ENCODE measurements at regions of chr6 and their contacts with region 1.

Region 1: DNA sequence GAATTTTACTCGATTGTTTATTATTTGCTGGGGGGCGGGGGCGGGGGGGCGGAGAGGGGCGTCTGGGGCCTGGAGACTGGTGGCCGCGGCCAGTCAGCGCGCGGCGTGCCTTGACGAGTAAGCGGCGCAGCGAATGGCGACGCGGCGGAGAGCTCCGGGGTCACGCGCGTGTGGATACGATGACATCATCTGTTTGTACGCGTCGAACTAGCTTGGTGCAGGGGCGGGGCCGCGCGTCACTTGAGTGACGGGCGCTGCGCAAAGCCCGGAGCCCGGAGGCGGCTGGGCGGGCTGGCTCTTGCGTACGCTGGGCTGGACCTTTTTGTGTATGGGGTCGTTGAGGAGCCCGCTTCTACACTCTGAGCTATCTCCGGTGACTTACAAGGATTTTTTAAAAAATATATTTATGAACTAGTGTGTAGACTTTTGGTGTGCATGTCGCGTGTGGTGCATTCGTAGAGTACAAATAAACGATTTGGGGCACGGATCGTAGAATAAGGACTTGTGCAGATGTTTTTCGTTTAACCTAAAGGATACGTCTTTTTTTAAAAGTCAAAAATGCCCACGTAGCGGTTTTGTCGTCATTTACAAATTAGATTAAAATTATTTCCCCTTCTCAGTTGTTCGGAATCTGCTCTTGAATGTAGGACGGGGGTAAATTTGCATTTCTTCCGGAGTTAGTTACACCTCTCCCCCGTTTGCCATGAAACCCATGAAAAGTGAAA is 2.2 kb upstream of the FOXO3 start:
- DNase-seq: peak; percentile 65 to 99
- ATAC-seq: peak; percentile 62 to 78
- H3K4me3 ChIP-seq: peak overlapping the region; percentile 95
- H3K27ac ChIP-seq: peak overlapping the region; percentile 95 to 98
- H3K4me1 ChIP-seq: peaks cover 15% of the 10 kb centered on the region; the same call in 1 of the 3 replicates
- CTCF ChIP-seq: no peak
- EP300 ChIP-seq: no peak
- POLR2A ChIP-seq: no peak
- RAD21 ChIP-seq: no peak

Region 2: GRCh38 chr6:108822401-108822800 is 263.9 kb after region 1 on chr6:
- CTCF ChIA-PET with region 1: no interaction called
- POLR2A ChIA-PET with region 1: no interaction called
- DNase-seq: no peak
- ATAC-seq: no peak
- H3K4me3 ChIP-seq: no peak overlapping the region
- H3K27ac ChIP-seq: no peak overlapping the region
- H3K4me1 ChIP-seq: no peaks in the 10 kb centered on the region
- CTCF ChIP-seq: no peak
- EP300 ChIP-seq: no peak
- POLR2A ChIP-seq: no peak
- RAD21 ChIP-seq: no peak

Region 3: DNA sequence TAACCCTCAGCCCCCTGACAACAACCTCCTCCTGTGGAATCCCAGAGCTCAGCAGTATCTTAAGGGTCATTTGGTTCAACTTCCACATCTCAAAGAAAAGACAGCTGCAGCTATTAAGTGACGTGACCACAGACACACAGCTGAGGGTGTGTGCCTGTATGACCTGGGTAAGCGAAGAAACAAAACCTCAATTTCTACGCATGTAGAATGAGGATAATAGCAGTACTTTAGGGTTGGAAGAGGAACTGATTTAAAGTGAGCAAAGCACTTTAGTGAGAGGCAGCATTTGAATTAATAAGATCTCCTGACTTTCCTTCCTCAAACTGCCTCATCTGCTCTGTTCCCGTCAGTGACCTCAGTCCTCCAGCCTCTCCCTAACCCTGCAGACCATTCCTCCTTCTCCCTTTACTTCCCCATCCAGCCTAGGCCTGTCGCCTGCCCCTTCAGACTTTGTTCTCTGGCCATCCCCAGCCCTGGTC is 282.9 kb after region 1 on chr6:
- CTCF ChIA-PET with region 1: no interaction called
- POLR2A ChIA-PET with region 1: no interaction called
- DNase-seq: no peak
- ATAC-seq: no peak
- H3K4me3 ChIP-seq: no peak overlapping the region
- H3K27ac ChIP-seq: no peak overlapping the region
- H3K4me1 ChIP-seq: no peaks in the 10 kb centered on the region
- CTCF ChIP-seq: no peak
- EP300 ChIP-seq: no peak
- POLR2A ChIP-seq: no peak
- RAD21 ChIP-seq: no peak

Region 4: DNA sequence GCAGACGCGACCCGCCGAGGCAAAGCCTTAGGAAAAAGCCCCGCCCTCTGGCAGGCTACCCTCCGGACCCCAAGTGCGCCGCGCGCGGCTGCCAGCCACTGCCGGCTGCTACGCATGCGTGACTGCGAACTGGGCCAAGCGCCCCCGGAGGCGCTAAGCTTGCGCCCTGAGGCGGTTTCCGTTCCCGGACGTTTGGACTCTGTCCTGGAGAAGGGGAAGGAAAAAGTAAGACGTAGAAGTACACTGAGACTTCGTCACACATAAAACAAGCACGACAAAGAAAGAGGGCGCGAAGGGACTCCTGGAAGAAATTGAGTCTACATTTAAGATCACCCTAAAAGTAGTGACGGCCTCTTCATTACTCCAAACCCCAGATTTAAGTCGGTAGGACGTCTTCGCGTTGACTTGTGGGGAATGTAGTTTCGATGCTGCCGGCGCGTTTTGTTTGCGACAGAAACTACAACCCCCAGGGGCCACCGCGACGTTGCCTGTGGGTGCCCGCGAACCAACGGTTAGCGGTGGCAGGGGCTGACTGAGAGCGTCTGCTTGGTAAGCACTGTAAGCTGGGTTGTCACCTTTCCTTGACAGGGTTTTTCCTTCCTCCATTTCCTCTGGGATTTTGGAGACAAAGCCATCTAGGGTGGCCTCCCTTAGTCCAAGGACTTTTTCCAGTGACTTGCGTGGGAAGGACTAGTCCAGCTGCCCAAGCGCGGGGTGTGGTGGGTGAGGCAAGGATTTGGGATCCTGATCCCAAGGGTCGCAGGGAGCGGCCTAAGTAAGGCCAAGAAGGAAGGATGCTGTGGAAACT is 536.7 kb after region 1 on chr6 and contains the start of gene CEP57L1:
- CTCF ChIA-PET with region 1: no interaction called
- POLR2A ChIA-PET with region 1: interaction called, 10 read pairs
- DNase-seq: peak; percentile 76 to 95
- ATAC-seq: peak; percentile 82 to 83
- H3K4me3 ChIP-seq: peak within 1 kb of the TSS; percentile 71
- H3K27ac ChIP-seq: peak within 1 kb of the TSS; percentile 88 to 89
- H3K4me1 ChIP-seq: peaks cover 22% of the 10 kb centered on the region
- CTCF ChIP-seq: no peak
- EP300 ChIP-seq: no peak
- POLR2A ChIP-seq: 0 out of 2 replicates have a peak, but pooled peaks have one; percentile 39
- RAD21 ChIP-seq: no peak
- polyA plus RNA-seq, gene CEP57L1: 16.4 and 20.5 TPM in 2 replicates